ENCODE measurements at regions of chr19 and their contacts with region 1.

Region 1: GRCh38 chr19:17859533-17860330 is at the start of gene RPL18A:
- H3K4me3 Mint-ChIP-seq: peak within 1 kb of the TSS; percentile 97
- H3K27ac Mint-ChIP-seq: peak within 1 kb of the TSS; percentile 96
- H3K4me1 Mint-ChIP-seq: peaks cover 32% of the 10 kb centered on the region
- H3K27me3 Mint-ChIP-seq: peaks cover 3% of the 10 kb centered on the region

Region 2: DNA sequence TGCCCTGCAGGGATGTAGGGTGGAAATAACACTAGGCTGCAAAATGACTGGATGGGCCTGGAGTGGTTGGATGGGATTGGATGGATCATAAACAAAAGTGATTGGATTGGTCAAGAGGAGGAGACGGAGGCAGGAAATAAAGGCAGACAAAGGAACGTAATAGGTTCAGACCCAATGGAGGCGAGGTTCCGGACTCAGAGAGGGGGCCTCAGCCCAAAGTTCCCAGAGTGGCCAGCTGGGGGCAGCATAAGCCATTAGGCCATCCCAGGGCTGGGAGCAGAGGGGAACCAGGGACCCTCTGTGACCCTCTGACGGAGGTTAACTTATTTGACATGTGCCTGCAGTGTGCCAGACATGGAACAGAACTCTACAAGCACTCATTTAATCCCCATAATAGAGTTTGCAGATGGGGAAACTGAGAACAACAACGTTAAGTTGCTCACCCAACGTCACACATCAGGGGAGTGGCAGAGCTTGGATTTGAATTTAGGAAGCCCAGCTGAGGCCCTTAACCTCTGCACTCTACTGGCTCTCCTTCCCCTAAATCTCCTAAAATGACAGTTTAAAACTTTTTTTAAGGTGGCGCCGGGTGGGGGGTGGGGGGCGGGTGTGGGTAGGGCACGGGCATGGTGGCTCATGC is 155.8 kb before region 1 on chr19:
- intact Hi-C with region 1: loop called (anchors 1 kb)
- H3K4me3 Mint-ChIP-seq: no peak overlapping the region
- H3K27ac Mint-ChIP-seq: peak overlapping the region; percentile 4
- H3K4me1 Mint-ChIP-seq: peaks cover 12% of the 10 kb centered on the region
- H3K27me3 Mint-ChIP-seq: peaks cover 9% of the 10 kb centered on the region

Region 3: GRCh38 chr19:17775245-17775916 is 84.4 kb before region 1 on chr19:
- intact Hi-C with region 1: loop called (anchors 5 kb)
- H3K4me3 Mint-ChIP-seq: no peak overlapping the region
- H3K27ac Mint-ChIP-seq: no peak overlapping the region
- H3K4me1 Mint-ChIP-seq: peaks cover 43% of the 10 kb centered on the region
- H3K27me3 Mint-ChIP-seq: no peaks in the 10 kb centered on the region

Region 4: DNA sequence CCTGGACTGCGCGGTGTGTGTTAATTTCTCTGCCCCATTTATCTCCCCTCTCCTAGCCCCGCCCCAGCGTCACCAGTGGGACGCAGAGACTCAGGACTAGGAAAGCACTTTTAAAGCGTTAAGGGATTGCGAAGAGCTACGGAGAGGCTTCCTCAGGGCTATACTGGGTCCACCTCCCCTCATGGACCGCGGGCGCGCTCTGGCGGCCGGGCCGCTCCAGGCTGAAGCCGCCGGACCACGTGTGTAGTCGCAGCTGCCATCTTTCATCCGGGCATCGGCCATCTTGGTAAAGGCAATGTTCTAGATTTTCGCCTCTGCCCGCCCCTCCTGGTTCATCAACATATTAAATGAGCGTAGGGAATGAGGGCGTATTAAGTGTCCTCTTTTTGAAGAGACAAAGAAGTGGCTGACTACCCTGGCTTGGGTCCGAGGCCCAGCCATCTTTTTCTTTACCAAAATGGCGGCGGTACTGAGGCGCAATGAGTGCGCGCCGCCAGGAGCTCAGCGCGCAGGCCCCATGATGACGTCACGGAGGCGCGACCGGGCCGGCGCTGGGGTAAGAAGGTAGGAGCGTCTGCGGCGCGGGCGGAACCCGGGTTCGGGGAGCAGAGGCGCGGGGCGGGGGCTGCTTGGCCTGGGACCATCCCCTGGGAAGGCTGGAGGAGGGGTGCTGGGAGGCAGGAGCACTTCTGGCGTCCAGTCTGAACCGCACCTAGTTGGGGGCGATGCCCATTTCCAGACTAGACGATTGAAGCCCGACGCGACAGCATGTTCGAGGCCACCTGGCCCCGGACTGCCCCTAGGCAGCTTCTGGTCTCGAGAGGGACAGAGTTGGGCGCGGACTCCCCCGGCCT is 73.0 kb after region 1 on chr19 and contains the start of gene CCDC124:
- intact Hi-C with region 1: loop called (anchors 1 kb)
- H3K4me3 Mint-ChIP-seq: peak within 1 kb of the TSS; percentile 89
- H3K27ac Mint-ChIP-seq: peak within 1 kb of the TSS; percentile 89
- H3K4me1 Mint-ChIP-seq: peaks cover 23% of the 10 kb centered on the region
- H3K27me3 Mint-ChIP-seq: peaks cover 7% of the 10 kb centered on the region

Region 5: GRCh38 chr19:17996826-17997316 is 137.1 kb after region 1 on chr19:
- intact Hi-C with region 1: loop called (anchors 5 kb)
- H3K4me3 Mint-ChIP-seq: no peak overlapping the region
- H3K27ac Mint-ChIP-seq: peak overlapping the region; percentile 91
- H3K4me1 Mint-ChIP-seq: peaks cover 44% of the 10 kb centered on the region
- H3K27me3 Mint-ChIP-seq: peaks cover 16% of the 10 kb centered on the region